Panc1 (cell line): ENCODE measurements at regions of chrX and their contacts with region 1.

Region 1: GRCh38 chrX:130047411-130047810 is 62.9 kb downstream of the ELF4 start:
- DNase-seq: no peak
- ATAC-seq: no peak
- H3K4me3 ChIP-seq: no peak overlapping the region
- H3K27ac ChIP-seq: no peak overlapping the region
- H3K4me1 ChIP-seq: no peaks in the 10 kb centered on the region
- H3K27me3 ChIP-seq: no peaks in the 10 kb centered on the region
- CTCF ChIP-seq: no peak

Region 2: DNA sequence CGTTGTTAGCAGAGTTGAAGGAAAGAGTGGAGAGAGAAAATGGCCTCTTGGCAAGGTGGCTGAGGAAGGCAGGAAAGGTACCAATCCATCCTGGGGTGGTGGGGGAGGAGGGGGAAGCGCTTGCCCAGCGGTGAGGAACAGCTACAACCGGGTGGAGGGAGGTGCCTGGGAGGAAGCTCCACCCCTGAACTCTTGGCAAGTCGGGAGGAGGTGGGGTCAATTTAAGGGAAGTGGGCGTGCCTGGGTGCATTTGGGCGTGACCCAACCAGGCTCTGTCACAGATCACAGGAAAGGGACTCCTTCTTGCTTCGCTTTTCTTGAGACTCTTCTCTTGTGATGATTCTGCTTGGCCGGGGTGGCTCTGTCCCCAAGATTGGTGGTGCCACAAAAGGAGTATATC is 23.3 kb before region 1 on chrX:
- CTCF ChIA-PET with region 1: interaction called, 3 read pairs
- POLR2A ChIA-PET with region 1: interaction called, 12 read pairs
- in situ Hi-C with region 1: no loop called
- intact Hi-C with region 1: no loop called
- DNase-seq: no peak
- ATAC-seq: peak; percentile 67
- H3K4me3 ChIP-seq: no peak overlapping the region
- H3K27ac ChIP-seq: no peak overlapping the region
- H3K4me1 ChIP-seq: no peaks in the 10 kb centered on the region
- H3K27me3 ChIP-seq: no peaks in the 10 kb centered on the region
- CTCF ChIP-seq: no peak

Region 3: DNA sequence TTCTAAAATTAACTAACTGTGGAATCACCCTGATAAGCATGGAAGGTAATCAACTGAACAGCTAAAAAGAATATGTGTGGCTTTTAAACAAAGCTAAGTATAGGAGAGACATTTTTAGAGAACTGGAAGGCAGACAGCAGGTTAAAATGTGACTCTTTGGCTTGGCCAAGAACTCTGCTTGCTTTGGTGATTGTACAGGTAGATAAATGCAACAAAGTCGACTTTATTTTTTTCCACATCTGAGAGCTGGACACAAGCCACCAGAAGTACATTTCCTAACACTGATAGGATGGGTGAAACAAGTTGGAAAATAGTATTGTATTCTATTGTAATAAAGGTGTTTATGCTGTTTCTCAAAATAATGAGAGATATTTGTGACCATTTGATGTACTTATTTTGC is 438.5 kb after region 1 on chrX:
- CTCF ChIA-PET with region 1: no interaction called
- POLR2A ChIA-PET with region 1: no interaction called
- in situ Hi-C with region 1: no loop called
- intact Hi-C with region 1: no loop called
- DNase-seq: no peak
- ATAC-seq: no peak
- H3K4me3 ChIP-seq: no peak overlapping the region
- H3K27ac ChIP-seq: no peak overlapping the region
- H3K4me1 ChIP-seq: no peaks in the 10 kb centered on the region
- H3K27me3 ChIP-seq: peaks cover 3% of the 10 kb centered on the region
- CTCF ChIP-seq: no peak